Panc1 (cell line): ENCODE measurements at regions of chr10 and their contacts with region 1.

Region 1: DNA sequence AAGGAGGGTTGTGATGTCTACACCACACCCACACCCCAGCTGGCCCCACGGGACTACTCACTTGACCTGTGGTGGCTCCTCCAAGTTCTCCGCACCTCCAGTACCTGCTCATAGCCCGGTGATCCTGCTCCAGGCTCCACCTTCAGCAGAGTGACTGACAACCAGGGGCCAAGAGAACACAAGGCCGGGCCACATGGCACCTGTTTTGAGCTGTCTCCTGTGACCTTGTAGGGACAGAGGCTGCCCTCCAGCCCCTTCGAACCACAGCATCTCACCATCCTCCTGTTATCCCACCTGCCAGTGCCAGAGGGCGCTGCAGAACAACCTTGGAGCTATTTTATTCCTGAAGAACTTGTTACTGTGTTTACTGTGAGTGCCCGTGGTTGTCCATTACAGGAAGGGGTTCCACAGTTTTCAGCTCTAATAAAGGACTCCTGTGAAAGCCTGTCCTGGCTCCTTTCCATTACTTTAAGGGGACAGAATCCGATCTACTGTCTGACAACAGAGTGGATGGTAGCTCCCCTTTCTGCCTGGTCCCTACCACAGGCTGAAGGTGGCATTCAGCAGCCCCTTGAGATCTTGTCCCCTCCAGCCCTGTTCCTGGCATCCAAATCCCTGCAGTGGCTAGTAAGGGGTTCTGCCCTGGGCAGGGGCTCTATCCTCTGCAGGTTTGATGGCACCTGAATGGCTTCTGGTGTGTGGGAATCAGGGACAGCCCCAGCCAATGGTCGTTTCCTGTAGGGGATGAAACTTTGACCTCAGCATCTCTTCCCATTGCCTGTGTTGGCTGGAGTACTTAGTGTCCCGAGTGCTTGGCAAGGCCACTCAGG is 50.8 kb downstream of the C10orf120 start:
- DNase-seq: peak; percentile 20
- ATAC-seq: peak; percentile 70
- H3K4me3 ChIP-seq: no peak overlapping the region
- H3K27ac ChIP-seq: no peak overlapping the region
- H3K4me1 ChIP-seq: no peaks in the 10 kb centered on the region
- H3K27me3 ChIP-seq: peaks cover 33% of the 10 kb centered on the region
- CTCF ChIP-seq: peak; percentile 92

Region 2: DNA sequence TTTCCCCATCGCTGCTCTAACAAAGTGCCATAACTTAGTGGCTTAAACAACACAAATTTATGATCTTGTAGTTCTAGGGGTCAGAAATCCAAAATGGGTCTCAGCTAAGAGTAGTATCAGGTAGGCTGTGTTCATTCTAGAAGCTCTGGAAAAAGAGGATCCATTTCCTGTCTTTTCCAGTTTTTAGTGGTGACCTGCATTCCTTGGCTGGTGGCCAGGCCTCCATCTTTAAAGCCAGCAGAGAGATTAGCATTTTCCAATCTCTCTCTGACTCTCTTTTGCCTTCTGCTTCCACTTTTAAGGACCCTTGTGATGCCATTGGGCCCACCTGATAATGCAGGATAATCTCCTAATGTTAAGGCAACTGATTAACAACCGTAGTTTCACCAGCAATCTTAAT is 91.8 kb after region 1 on chr10:
- CTCF ChIA-PET with region 1: no interaction called
- POLR2A ChIA-PET with region 1: interaction called, 15 read pairs
- in situ Hi-C with region 1: no loop called
- intact Hi-C with region 1: no loop called
- DNase-seq: no peak
- ATAC-seq: no peak
- H3K4me3 ChIP-seq: no peak overlapping the region
- H3K27ac ChIP-seq: no peak overlapping the region
- H3K4me1 ChIP-seq: no peaks in the 10 kb centered on the region
- H3K27me3 ChIP-seq: peaks cover 12% of the 10 kb centered on the region
- CTCF ChIP-seq: no peak